Naive thymus-derived CD4-positive, alpha-beta T cell (primary cell): ENCODE measurements at regions of chr2 and their contacts with region 1.

Region 1: DNA sequence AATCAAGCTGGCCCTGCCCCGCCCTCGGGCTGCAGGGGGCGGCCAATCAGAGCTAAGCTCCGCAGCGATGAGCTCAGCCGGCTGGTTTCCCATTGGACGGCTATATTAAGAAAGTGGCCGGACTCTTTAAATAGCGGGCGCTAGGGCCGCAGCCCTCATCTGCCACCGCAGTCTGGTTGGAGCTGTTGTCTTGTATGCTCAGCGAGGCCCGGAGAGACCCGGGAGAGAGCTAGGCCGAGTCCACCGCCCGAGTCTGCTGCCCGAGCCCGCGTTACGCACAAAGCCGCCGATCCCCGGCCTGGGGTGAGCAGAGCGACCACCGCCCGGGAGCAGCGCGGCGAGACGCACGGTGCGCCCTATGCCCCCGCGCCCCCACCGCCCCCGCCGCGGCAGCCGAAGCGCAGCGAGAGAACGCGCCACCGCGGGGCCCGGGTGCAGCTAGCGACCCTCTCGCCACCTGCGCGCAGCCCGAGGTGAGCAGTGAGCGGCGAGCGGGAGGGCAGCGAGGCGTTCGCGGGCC is at the start of gene RHOB:
- DNase-seq: peak; percentile 75 to 90 (median 82)
- ATAC-seq: peak; percentile 97
- H3K4me3 ChIP-seq: peak within 1 kb of the TSS; percentile 71
- H3K4me3 Mint-ChIP-seq: peak within 1 kb of the TSS; percentile 77 to 88 (median 81)
- H3K27ac ChIP-seq: peak within 1 kb of the TSS; percentile 59
- H3K27ac Mint-ChIP-seq: peak within 1 kb of the TSS in 5 of 9 donors; percentile 11 to 81 (median 51)
- H3K4me1 ChIP-seq: peaks cover 6 to 12% of the 10 kb centered on the region in 2 donors
- H3K4me1 Mint-ChIP-seq: peaks cover 0 to 7% (median 4%) of the 10 kb centered on the region in 7 donors
- H3K27me3 ChIP-seq: peaks cover 0 to 3% of the 10 kb centered on the region in 2 donors
- H3K27me3 Mint-ChIP-seq: peaks cover 0 to 68% (median 13%) of the 10 kb centered on the region in 5 donors
- total RNA-seq, gene RHOB: 2.5 to 244 (median 11.7) TPM

Region 2: DNA sequence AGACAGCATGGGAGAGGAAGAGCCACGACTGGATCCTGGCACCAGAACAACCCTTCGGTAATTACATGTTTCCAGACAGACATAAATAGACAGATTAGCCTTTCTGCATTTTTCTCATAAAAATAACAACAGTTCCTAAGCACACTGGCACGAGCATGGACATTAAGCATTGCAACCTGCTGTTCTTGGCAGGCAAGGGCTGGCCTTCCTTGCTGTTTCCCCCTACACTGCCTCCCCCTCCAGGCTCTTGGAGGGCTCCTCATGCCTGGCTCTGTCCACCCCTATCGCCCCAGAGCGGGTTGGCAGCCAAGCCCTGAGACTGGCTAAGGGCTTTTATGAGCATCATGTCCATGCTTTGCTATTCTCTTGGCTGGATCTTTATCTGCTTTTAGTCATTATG is 634.8 kb before region 1 on chr2:
- CTCF ChIA-PET with region 1: no interaction called
- POLR2A ChIA-PET with region 1: no interaction called
- intact Hi-C with region 1: no loop called
- DNase-seq: no peak
- ATAC-seq: no peak
- H3K4me3 ChIP-seq: no peak overlapping the region
- H3K4me3 Mint-ChIP-seq: no peak overlapping the region
- H3K27ac ChIP-seq: no peak overlapping the region
- H3K27ac Mint-ChIP-seq: no peak overlapping the region
- H3K4me1 ChIP-seq: no peaks in the 10 kb centered on the region
- H3K4me1 Mint-ChIP-seq: peaks cover 0 to 2% (median 0%) of the 10 kb centered on the region in 7 donors
- H3K27me3 ChIP-seq: no peaks in the 10 kb centered on the region
- H3K27me3 Mint-ChIP-seq: peaks cover 0 to 6% (median 2%) of the 10 kb centered on the region in 5 donors

Region 3: GRCh38 chr2:19901442-19902215 is 545.3 kb before region 1 on chr2 and contains the start of gene TTC32:
- CTCF ChIA-PET with region 1: no interaction called
- POLR2A ChIA-PET with region 1: no interaction called
- intact Hi-C with region 1: loop called in 1 of 2 experiments (anchors 1 kb)
- DNase-seq: peak; percentile 90 to 98 (median 96)
- ATAC-seq: peak; percentile 91
- H3K4me3 ChIP-seq: peak within 1 kb of the TSS; percentile 95
- H3K4me3 Mint-ChIP-seq: peak within 1 kb of the TSS; percentile 84 to 99 (median 96)
- H3K27ac ChIP-seq: peak within 1 kb of the TSS; percentile 83
- H3K27ac Mint-ChIP-seq: peak within 1 kb of the TSS; percentile 93 to 100 (median 99)
- H3K4me1 ChIP-seq: peaks cover 15 to 23% of the 10 kb centered on the region in 2 donors
- H3K4me1 Mint-ChIP-seq: peaks cover 24 to 35% (median 31%) of the 10 kb centered on the region in 7 donors
- H3K27me3 ChIP-seq: no peaks in the 10 kb centered on the region
- H3K27me3 Mint-ChIP-seq: peaks cover 8 to 19% (median 13%) of the 10 kb centered on the region in 5 donors
- total RNA-seq, gene TTC32: 23.1 to 58.0 (median 44.9) TPM

Region 4: GRCh38 chr2:20525041-20526035 is 78.4 kb after region 1 on chr2:
- CTCF ChIA-PET with region 1: no interaction called
- POLR2A ChIA-PET with region 1: no interaction called
- intact Hi-C with region 1: no loop called
- DNase-seq: no peak
- ATAC-seq: no peak
- H3K4me3 ChIP-seq: no peak overlapping the region
- H3K4me3 Mint-ChIP-seq: peak overlapping the region in 1 of 10 donors; percentile 40
- H3K27ac ChIP-seq: no peak overlapping the region
- H3K27ac Mint-ChIP-seq: no peak overlapping the region
- H3K4me1 ChIP-seq: no peaks in the 10 kb centered on the region
- H3K4me1 Mint-ChIP-seq: peaks cover 0 to 7% (median 0%) of the 10 kb centered on the region in 7 donors
- H3K27me3 ChIP-seq: no peaks in the 10 kb centered on the region
- H3K27me3 Mint-ChIP-seq: peaks cover 0 to 5% (median 4%) of the 10 kb centered on the region in 5 donors

Region 5: DNA sequence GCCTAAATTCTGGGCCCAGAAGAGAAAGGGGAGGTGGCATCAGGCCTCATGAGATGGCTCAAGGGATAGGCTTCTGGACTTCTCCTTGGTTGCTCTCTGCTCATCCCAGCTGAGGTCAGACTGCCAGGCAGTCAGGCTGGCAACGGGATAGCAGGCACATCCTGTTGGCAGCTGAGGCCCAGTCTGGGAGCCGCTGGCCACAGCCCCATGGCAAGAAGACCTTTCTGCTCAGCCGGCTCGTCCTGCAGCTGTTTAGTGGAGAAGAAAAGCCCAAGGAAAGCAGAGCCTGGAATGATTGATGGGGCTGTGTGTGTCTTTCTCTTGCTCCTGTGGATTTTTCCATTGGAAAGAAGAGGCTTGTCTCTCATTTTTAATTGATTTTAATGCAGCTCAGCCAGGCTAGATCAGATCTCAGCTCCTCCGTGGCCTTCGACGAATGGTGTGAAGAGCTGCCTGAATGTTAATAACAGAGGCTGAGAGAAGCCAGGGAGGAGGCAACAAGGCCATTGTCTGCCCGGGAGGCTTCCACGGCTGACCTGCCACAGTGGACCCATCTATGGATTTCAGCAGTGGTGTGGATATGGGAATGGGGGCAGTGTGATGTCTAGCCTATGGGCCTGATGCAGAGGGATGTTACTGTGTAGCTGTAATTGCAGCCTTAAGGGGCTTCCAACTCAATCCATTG is 104.4 kb after region 1 on chr2:
- CTCF ChIA-PET with region 1: no interaction called
- POLR2A ChIA-PET with region 1: no interaction called
- intact Hi-C with region 1: no loop called
- DNase-seq: no peak
- ATAC-seq: no peak
- H3K4me3 ChIP-seq: no peak overlapping the region
- H3K4me3 Mint-ChIP-seq: no peak overlapping the region
- H3K27ac ChIP-seq: no peak overlapping the region
- H3K27ac Mint-ChIP-seq: no peak overlapping the region
- H3K4me1 ChIP-seq: no peaks in the 10 kb centered on the region
- H3K4me1 Mint-ChIP-seq: peaks cover 0 to 4% (median 0%) of the 10 kb centered on the region in 7 donors
- H3K27me3 ChIP-seq: no peaks in the 10 kb centered on the region
- H3K27me3 Mint-ChIP-seq: peaks cover 0 to 7% (median 0%) of the 10 kb centered on the region in 5 donors

Region 6: GRCh38 chr2:20573620-20574422 is 126.8 kb after region 1 on chr2:
- CTCF ChIA-PET with region 1: interaction called, 3 read pairs
- POLR2A ChIA-PET with region 1: interaction called, 6 read pairs
- intact Hi-C with region 1: loop called (anchors 2 to 5 kb)
- DNase-seq: no peak
- ATAC-seq: no peak
- H3K4me3 ChIP-seq: no peak overlapping the region
- H3K4me3 Mint-ChIP-seq: no peak overlapping the region
- H3K27ac ChIP-seq: no peak overlapping the region
- H3K27ac Mint-ChIP-seq: peak overlapping the region in 1 of 9 donors; percentile 38
- H3K4me1 ChIP-seq: peaks cover 13% of the 10 kb centered on the region in 2 donors
- H3K4me1 Mint-ChIP-seq: peaks cover 9 to 32% (median 10%) of the 10 kb centered on the region in 7 donors
- H3K27me3 ChIP-seq: no peaks in the 10 kb centered on the region
- H3K27me3 Mint-ChIP-seq: no peaks in the 10 kb centered on the region

Region 7: GRCh38 chr2:20578895-20579825 is 132.2 kb after region 1 on chr2:
- CTCF ChIA-PET with region 1: interaction called, 3 read pairs
- POLR2A ChIA-PET with region 1: interaction called, 6 read pairs
- intact Hi-C with region 1: loop called (anchors 2 to 5 kb)
- DNase-seq: no peak
- ATAC-seq: no peak
- H3K4me3 ChIP-seq: no peak overlapping the region
- H3K4me3 Mint-ChIP-seq: no peak overlapping the region
- H3K27ac ChIP-seq: no peak overlapping the region
- H3K27ac Mint-ChIP-seq: no peak overlapping the region
- H3K4me1 ChIP-seq: peaks cover 13% of the 10 kb centered on the region in 2 donors
- H3K4me1 Mint-ChIP-seq: peaks cover 9 to 22% (median 10%) of the 10 kb centered on the region in 7 donors
- H3K27me3 ChIP-seq: no peaks in the 10 kb centered on the region
- H3K27me3 Mint-ChIP-seq: no peaks in the 10 kb centered on the region

Region 8: DNA sequence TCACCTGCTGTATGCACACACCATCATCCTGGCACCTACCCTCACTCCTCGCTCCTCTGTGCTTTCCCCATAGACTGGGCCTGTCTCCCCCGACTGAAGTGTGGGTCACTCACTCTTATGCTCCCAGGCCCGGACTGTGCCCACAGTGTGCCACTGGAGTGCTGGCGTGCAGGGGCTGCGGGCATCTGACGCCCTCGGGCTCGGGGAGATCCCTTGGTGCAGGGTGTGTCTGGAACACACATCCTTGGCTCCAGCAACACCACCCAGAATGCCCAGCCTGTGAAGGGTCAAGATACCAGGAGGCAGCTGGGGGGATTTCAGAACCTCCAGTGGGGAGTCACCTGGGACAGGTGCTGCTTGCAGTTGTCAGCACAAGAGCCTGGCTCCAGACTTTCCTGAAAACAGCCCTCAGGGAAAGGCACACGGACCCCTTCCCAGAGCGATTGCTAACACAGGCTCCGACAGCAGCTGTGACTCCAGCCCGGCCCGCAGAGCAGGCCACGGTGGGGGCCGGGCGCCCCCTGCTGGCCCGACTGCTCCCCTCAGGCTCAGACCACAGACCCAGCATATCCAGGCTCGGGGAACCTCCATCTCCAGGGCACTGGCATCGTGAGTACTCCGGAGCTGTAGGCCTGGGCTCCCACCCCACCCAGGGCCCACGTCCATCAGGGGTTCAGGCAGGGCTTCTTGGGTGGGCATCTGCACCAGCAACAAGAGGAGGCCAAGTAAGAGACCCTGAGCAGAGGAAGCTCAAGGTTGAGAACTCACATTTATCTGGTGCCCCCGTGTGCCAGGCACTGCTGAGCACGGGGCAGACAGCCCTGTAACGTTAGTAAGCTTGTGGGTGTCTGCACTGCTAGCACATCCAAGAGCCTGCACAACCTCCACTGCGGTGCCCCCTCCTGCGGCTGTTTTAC is 195.3 kb after region 1 on chr2:
- CTCF ChIA-PET with region 1: interaction called, 28 read pairs
- POLR2A ChIA-PET with region 1: interaction called, 10 read pairs
- intact Hi-C with region 1: loop called (anchors 1 kb)
- DNase-seq: peak; percentile 45 to 79 (median 74)
- ATAC-seq: peak; percentile 96
- H3K4me3 ChIP-seq: no peak overlapping the region
- H3K4me3 Mint-ChIP-seq: no peak overlapping the region
- H3K27ac ChIP-seq: no peak overlapping the region
- H3K27ac Mint-ChIP-seq: peak overlapping the region in 1 of 9 donors; percentile 65
- H3K4me1 ChIP-seq: no peaks in the 10 kb centered on the region
- H3K4me1 Mint-ChIP-seq: peaks cover 0 to 12% (median 7%) of the 10 kb centered on the region in 7 donors
- H3K27me3 ChIP-seq: no peaks in the 10 kb centered on the region
- H3K27me3 Mint-ChIP-seq: no peaks in the 10 kb centered on the region

Region 9: DNA sequence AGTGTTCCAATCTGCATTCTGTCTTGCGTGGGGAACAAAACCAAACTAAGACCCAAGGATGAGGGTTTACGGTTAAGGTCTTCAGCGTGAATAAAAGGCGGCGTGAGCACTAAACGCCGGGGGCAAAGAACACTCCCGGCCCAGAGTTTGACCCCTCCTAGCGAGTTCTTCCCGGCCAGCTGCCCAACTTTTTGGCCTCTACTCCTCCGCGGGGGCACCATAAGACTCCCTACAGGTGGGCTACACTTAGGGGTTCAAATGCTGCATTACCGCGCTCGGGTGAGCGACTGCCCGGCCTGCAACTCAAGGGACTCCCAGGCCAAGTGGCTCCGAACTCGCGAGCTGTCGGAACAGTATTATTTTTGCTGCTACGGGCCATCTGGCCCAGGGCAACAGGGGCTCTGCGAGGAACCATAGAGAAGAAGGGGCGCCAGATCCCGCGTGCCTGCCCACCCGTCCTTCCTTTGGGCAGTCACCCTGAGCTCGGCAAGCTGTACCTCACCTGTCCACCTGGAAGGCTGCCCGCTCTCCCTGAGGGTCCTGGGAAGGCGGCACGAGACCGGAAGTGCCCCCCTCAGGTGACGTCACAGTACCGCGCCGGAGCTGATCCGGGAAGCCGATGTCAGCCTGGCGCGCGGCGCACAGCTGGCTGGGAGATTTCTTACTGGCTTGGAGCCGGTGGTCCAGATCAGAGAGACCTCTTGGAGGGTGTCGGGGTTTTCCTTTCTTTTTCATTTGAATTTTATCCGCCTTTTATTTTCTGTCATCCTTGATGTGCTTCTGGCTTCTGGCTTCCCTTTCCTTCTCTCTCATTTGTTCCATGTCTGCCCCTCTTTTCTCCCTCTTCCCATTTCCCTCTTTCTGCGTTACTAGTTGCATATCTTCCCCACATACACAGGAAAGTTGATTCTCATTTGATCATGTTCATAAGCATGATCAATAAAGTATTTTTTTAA is 375.8 kb after region 1 on chr2 and contains the start of gene LDAH:
- CTCF ChIA-PET with region 1: no interaction called
- POLR2A ChIA-PET with region 1: interaction called, 3 read pairs
- intact Hi-C with region 1: loop called (anchors 1 to 5 kb)
- DNase-seq: peak; percentile 71 to 84 (median 81)
- ATAC-seq: peak; percentile 91
- H3K4me3 ChIP-seq: peak within 1 kb of the TSS; percentile 98
- H3K4me3 Mint-ChIP-seq: peak within 1 kb of the TSS; percentile 93 to 99 (median 97)
- H3K27ac ChIP-seq: peak within 1 kb of the TSS; percentile 86
- H3K27ac Mint-ChIP-seq: peak within 1 kb of the TSS; percentile 95 to 99 (median 98)
- H3K4me1 ChIP-seq: no peaks in the 10 kb centered on the region
- H3K4me1 Mint-ChIP-seq: peaks cover 7 to 45% (median 25%) of the 10 kb centered on the region in 7 donors
- H3K27me3 ChIP-seq: no peaks in the 10 kb centered on the region
- H3K27me3 Mint-ChIP-seq: peaks cover 0 to 2% (median 0%) of the 10 kb centered on the region in 5 donors
- total RNA-seq, gene LDAH: 11.1 to 29.8 (median 18.4) TPM

Region 10: DNA sequence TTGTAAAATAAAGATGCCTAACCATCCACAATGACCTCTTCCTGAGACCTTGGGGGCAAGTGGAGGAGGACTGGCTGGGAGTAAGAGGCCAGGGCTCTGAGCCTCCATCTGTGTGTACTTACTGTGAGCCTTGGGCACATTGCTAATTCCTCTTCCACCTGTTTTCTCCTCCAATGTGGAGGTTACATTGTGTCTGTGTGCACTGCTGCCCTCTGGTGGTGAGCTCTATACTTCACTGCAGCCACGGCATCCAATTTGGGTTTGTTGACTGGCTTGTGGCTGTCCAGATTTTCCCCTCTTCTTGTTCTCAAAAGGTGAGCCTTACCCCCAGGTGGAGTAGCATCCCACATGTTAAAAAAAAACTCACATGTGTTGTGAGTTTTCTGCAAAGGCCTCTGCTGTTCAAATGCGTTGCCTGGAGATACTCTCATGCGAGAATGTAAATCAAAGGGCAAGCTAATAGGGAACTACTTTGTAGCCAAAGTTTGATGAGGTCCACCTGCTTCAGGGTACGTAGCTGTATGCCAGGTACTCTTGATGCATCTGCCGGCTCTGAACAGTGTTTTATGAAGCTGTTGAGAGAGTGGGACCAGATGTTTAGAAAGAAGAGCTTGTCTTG is 516.1 kb after region 1 on chr2:
- CTCF ChIA-PET with region 1: interaction called, 3 read pairs
- POLR2A ChIA-PET with region 1: no interaction called
- intact Hi-C with region 1: loop called in 1 of 2 experiments (anchors 1 kb)
- DNase-seq: peak; percentile 10 to 63 (median 45)
- ATAC-seq: peak; percentile 79
- H3K4me3 ChIP-seq: no peak overlapping the region
- H3K4me3 Mint-ChIP-seq: no peak overlapping the region
- H3K27ac ChIP-seq: no peak overlapping the region
- H3K27ac Mint-ChIP-seq: no peak overlapping the region
- H3K4me1 ChIP-seq: no peaks in the 10 kb centered on the region
- H3K4me1 Mint-ChIP-seq: no peaks in the 10 kb centered on the region
- H3K27me3 ChIP-seq: no peaks in the 10 kb centered on the region
- H3K27me3 Mint-ChIP-seq: peaks cover 3 to 35% (median 13%) of the 10 kb centered on the region in 5 donors